H1 (cell line): ENCODE measurements at regions of chr6 and their contacts with region 1.

Region 1: GRCh38 chr6:89205819-89206218 is 11.3 kb downstream of the GABRR1 start:
- DNase-seq: peak in 1 of 2 experiments; percentile 38
- H3K4me3 ChIP-seq: no peak overlapping the region
- H3K27ac ChIP-seq: no peak overlapping the region
- H3K4me1 ChIP-seq: no peaks in the 10 kb centered on the region
- H3K27me3 ChIP-seq: no peaks in the 10 kb centered on the region
- CTCF ChIP-seq: no peak
- EP300 ChIP-seq: no peak
- POLR2A ChIP-seq: no peak
- RAD21 ChIP-seq: no peak

Region 2: GRCh38 chr6:89217299-89217910 is 11.6 kb after region 1 on chr6 and contains the start of gene GABRR1:
- CTCF ChIA-PET with region 1: interaction called, 11 read pairs
- POLR2A ChIA-PET with region 1: no interaction called
- DNase-seq: no peak
- H3K4me3 ChIP-seq: no peak within 1 kb of the TSS
- H3K27ac ChIP-seq: no peak within 1 kb of the TSS
- H3K4me1 ChIP-seq: peaks cover 0 to 7% (median 3%) of the 10 kb centered on the region in 4 experiments; a peak in 5 of 7 replicates
- H3K27me3 ChIP-seq: no peaks in the 10 kb centered on the region
- CTCF ChIP-seq: no peak
- EP300 ChIP-seq: no peak
- POLR2A ChIP-seq: no peak
- RAD21 ChIP-seq: no peak
- total RNA-seq, gene GABRR1: 0.17 and 0.60 TPM in 2 replicates

Region 3: DNA sequence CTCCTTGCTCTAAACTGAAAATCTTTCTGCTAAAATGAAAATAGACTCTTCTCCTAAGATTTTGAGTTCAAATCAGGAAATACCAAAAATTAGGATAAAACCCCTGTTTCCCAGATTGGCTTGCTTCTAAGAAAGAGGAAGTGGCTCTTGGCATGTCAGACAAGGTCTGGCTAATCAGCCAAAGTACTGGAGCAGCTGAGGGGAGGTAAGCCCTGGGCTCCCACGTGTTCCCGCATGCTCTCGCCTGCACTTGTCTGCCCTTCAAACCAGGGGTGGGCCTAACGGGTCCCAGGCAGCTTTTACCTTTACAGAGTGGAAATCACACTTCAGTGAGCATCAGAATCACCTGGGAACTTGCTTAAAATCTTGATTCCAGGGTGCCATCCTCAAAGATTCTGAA is 54.5 kb after region 1 on chr6:
- CTCF ChIA-PET with region 1: no interaction called
- POLR2A ChIA-PET with region 1: no interaction called
- DNase-seq: peak in 1 of 2 experiments; percentile 24
- H3K4me3 ChIP-seq: no peak overlapping the region
- H3K27ac ChIP-seq: no peak overlapping the region
- H3K4me1 ChIP-seq: no peaks in the 10 kb centered on the region
- H3K27me3 ChIP-seq: no peaks in the 10 kb centered on the region
- CTCF ChIP-seq: no peak
- EP300 ChIP-seq: no peak
- POLR2A ChIP-seq: no peak
- RAD21 ChIP-seq: no peak

Region 4: DNA sequence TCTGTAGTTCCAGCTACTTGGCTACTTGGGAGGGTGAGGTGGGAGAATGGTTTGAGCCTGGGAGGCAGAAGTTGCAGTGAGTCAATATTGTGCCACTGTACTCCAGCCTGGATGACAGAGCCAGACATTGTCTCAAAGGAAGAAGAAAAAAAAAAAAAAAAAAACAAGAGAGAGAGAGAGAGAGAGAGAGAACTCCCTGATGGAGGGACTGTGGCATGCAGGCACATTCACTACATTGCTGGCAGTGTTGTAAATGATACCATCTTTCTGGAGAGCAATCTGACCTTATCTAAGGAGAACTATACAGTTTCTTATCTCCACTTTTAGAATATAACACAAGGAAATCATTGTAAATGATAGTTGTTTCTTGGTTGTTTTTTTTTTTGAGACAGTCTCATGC is 528.7 kb after region 1 on chr6:
- CTCF ChIA-PET with region 1: no interaction called
- POLR2A ChIA-PET with region 1: no interaction called
- DNase-seq: no peak
- H3K4me3 ChIP-seq: no peak overlapping the region
- H3K27ac ChIP-seq: no peak overlapping the region
- H3K4me1 ChIP-seq: no peaks in the 10 kb centered on the region
- H3K27me3 ChIP-seq: no peaks in the 10 kb centered on the region
- CTCF ChIP-seq: no peak
- EP300 ChIP-seq: no peak
- POLR2A ChIP-seq: no peak
- RAD21 ChIP-seq: no peak